ENCODE measurements at regions of chr12 and their contacts with region 1.

Region 1: DNA sequence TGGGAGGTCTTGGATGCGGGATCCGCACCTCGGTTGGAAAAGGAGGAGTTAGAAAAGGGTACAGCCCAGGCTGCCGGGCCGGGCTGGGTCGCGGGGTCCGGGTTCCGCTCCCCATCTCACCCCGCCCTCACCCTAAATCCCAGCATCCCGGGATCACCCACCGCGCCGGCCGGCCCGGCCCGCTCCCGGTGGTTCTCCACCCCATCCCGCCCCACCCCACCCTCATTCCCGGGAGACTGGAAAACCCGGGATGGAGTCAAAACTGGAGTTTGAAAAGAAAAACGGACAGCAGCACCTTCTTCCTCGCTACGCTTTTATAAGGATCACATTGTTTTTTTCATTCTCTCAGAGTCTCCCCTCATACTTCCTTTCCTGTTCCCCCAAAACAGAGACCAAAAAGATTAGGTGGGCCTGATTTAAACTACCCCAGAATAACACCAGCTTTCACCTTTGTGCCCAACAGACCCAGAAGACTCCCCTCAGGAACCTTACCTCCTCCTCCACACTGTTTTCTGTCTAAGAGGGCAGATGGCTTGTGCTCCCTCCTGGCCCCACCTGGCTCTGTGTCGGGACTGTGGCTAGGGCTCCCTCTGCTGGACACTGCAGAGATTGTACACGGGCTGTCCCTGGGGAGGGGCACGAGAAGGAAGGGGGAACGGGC is 2.8 kb downstream of the GLI1 start:
- DNase-seq: peak; percentile 96
- ATAC-seq: peak; percentile 64
- H3K4me3 ChIP-seq: peak overlapping the region; percentile 58 to 93 (median 81)
- H3K4me3 Mint-ChIP-seq: peak overlapping the region; percentile 92
- H3K27ac ChIP-seq: peak overlapping the region; percentile 15 to 58
- H3K27ac Mint-ChIP-seq: peak overlapping the region; percentile 93
- H3K4me1 ChIP-seq: peaks cover 23 to 48% of the 10 kb centered on the region in 2 donors
- H3K4me1 Mint-ChIP-seq: peaks cover 40% of the 10 kb centered on the region
- H3K27me3 ChIP-seq: no peaks in the 10 kb centered on the region
- H3K27me3 Mint-ChIP-seq: no peaks in the 10 kb centered on the region
- CTCF ChIP-seq: peak; percentile 88

Region 2: GRCh38 chr12:57268264-57268663 is 194.1 kb before region 1 on chr12:
- CTCF ChIA-PET with region 1: interaction called, 29 read pairs
- POLR2A ChIA-PET with region 1: no interaction called
- intact Hi-C with region 1: no loop called
- DNase-seq: no peak
- ATAC-seq: no peak
- H3K4me3 ChIP-seq: no peak overlapping the region
- H3K4me3 Mint-ChIP-seq: no peak overlapping the region
- H3K27ac ChIP-seq: no peak overlapping the region
- H3K27ac Mint-ChIP-seq: peak overlapping the region; percentile 59
- H3K4me1 ChIP-seq: peaks cover 0 to 6% of the 10 kb centered on the region in 2 donors
- H3K4me1 Mint-ChIP-seq: peaks cover 6% of the 10 kb centered on the region
- H3K27me3 ChIP-seq: no peaks in the 10 kb centered on the region
- H3K27me3 Mint-ChIP-seq: no peaks in the 10 kb centered on the region
- CTCF ChIP-seq: no peak

Region 3: DNA sequence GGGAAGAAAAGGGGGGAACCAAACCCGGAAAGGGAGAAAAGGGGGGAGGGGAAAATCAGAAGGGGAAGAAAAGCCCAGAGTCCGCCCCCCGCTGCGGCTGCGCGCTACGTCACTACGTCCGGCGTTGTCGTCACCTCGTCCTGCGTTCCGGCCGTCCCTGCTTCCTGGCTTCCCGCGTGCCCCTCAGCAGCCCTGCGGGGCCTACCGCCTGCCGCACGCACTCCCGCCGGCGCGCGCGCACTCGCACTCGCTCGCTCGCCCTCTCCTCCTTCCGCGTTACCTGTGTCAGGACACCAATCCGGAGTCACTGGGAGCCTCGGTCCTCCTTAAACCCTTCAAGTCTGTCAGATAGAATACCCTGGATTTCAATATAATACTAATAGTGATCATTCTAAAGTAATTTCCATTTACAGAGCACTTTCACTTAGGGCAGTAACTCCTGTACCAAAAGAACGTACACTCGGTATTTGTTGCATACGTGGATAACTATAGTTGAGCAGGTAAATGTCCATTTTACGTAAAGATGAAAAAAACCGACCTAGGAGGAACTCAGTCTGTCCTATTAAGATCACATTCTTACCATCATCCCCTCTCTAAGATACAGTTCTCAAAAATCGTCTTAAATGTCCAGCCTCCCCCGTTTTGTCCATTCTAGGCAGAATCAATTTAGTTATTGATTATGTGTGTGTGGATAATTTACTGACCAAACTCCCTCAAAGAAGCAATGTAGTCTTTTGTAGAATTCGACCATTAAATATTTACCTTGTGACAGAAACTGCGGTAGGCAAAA is 31.3 kb before region 1 on chr12 and contains the start of gene R3HDM2:
- CTCF ChIA-PET with region 1: interaction called, 15 read pairs
- POLR2A ChIA-PET with region 1: interaction called, 4 read pairs
- intact Hi-C with region 1: loop called (anchors 1 kb)
- DNase-seq: peak; percentile 97
- ATAC-seq: peak; percentile 91
- H3K4me3 ChIP-seq: peak within 1 kb of the TSS; percentile 60 to 94 (median 64)
- H3K4me3 Mint-ChIP-seq: peak within 1 kb of the TSS; percentile 99
- H3K27ac ChIP-seq: peak within 1 kb of the TSS; percentile 96
- H3K27ac Mint-ChIP-seq: peak within 1 kb of the TSS; percentile 99
- H3K4me1 ChIP-seq: peaks cover 13 to 19% of the 10 kb centered on the region in 2 donors
- H3K4me1 Mint-ChIP-seq: peaks cover 41% of the 10 kb centered on the region
- H3K27me3 ChIP-seq: no peaks in the 10 kb centered on the region
- H3K27me3 Mint-ChIP-seq: no peaks in the 10 kb centered on the region
- CTCF ChIP-seq: no peak
- total RNA-seq, gene R3HDM2: 129 TPM in 2 replicates

Region 4: GRCh38 chr12:57487597-57488401 is 25.4 kb after region 1 on chr12 and contains the start of gene MARS1:
- CTCF ChIA-PET with region 1: interaction called, 18 read pairs
- POLR2A ChIA-PET with region 1: interaction called, 4 read pairs
- intact Hi-C with region 1: loop called (anchors 1 kb)
- DNase-seq: peak; percentile 96
- ATAC-seq: peak; percentile 98
- H3K4me3 ChIP-seq: peak within 1 kb of the TSS; percentile 66 to 95 (median 86)
- H3K4me3 Mint-ChIP-seq: peak within 1 kb of the TSS; percentile 89
- H3K27ac ChIP-seq: peak within 1 kb of the TSS; percentile 42 to 86
- H3K27ac Mint-ChIP-seq: peak within 1 kb of the TSS; percentile 93
- H3K4me1 ChIP-seq: peaks cover 20 to 25% of the 10 kb centered on the region in 2 donors
- H3K4me1 Mint-ChIP-seq: peaks cover 31% of the 10 kb centered on the region
- H3K27me3 ChIP-seq: no peaks in the 10 kb centered on the region
- H3K27me3 Mint-ChIP-seq: no peaks in the 10 kb centered on the region
- CTCF ChIP-seq: no peak
- total RNA-seq, gene MARS1: 183 and 193 TPM in 2 replicates

Region 5: GRCh38 chr12:57621497-57622292 is 159.3 kb after region 1 on chr12:
- CTCF ChIA-PET with region 1: interaction called, 16 read pairs
- POLR2A ChIA-PET with region 1: no interaction called
- intact Hi-C with region 1: loop called (anchors 1 kb)
- DNase-seq: peak; percentile 76
- ATAC-seq: peak; percentile 78
- H3K4me3 ChIP-seq: peak overlapping the region; percentile 13 to 51 (median 47)
- H3K4me3 Mint-ChIP-seq: peak overlapping the region; percentile 85
- H3K27ac ChIP-seq: no peak overlapping the region
- H3K27ac Mint-ChIP-seq: no peak overlapping the region
- H3K4me1 ChIP-seq: peaks cover 32 to 48% of the 10 kb centered on the region in 2 donors
- H3K4me1 Mint-ChIP-seq: peaks cover 37% of the 10 kb centered on the region
- H3K27me3 ChIP-seq: peaks cover 0 to 92% (median 69%) of the 10 kb centered on the region in 4 experiments
- H3K27me3 Mint-ChIP-seq: peaks cover 88% of the 10 kb centered on the region
- CTCF ChIP-seq: peak; percentile 97